Mammary epithelial cell (primary cell): ENCODE measurements at regions of chr7 and their contacts with region 1.

Region 1: GRCh38 chr7:91880413-91881241 is at the start of gene MTERF1:
- DNase-seq: peak; percentile 85
- H3K4me3 ChIP-seq: peak within 1 kb of the TSS; percentile 69 to 85 (median 72)
- H3K27ac ChIP-seq: peak within 1 kb of the TSS; percentile 55
- H3K4me1 ChIP-seq: peaks cover 3% of the 10 kb centered on the region
- H3K27me3 ChIP-seq: no peaks in the 10 kb centered on the region
- CTCF ChIP-seq: peak; percentile 84 to 97
- total RNA-seq, gene MTERF1: 11.1 to 16.5 TPM

Region 2: DNA sequence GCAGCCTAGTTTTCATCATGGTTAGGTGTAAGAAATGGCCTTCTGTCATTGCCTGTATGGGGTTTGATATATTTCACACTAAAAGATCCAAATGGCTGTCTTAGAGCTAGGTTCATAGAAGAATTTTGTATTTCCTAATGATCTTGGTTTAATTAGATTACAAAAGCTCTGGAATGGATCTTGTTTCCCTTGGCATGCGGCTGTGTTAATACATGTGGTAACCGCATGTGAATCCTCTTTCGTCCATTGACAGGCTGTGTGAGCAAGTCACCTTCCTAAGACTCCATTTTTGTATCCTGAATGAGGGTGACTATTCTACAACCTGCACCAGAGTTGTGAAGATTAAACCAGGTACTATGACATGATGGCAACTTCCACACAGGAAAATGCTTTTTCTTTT is 628.8 kb before region 1 on chr7:
- CTCF ChIA-PET with region 1: no interaction called
- dilution Hi-C with region 1: no loop called
- in situ Hi-C with region 1: no loop called
- intact Hi-C with region 1: no loop called
- DNase-seq: no peak
- H3K4me3 ChIP-seq: no peak overlapping the region
- H3K27ac ChIP-seq: no peak overlapping the region
- H3K4me1 ChIP-seq: peaks cover 23% of the 10 kb centered on the region
- H3K27me3 ChIP-seq: no peaks in the 10 kb centered on the region
- CTCF ChIP-seq: no peak

Region 3: DNA sequence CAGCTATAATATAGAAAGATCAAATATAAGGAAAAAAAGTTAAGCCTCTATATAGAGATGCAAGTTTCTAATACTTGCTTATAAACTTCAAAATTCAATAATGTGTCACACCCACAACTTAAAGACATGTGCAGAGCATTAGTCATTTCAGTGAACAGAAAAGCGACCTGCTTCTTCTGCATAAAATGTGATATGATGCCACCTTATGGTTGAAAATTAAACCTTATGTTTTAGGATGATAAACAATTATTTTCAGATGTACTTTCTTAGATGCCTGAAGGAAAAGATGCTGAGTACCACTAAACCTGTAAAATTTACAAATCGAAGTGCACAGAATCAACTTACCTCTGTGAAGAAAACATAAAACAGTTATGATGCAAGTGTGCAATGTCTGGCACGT is 96.2 kb before region 1 on chr7:
- CTCF ChIA-PET with region 1: no interaction called
- dilution Hi-C with region 1: no loop called
- in situ Hi-C with region 1: no loop called
- intact Hi-C with region 1: loop called (anchors 5 kb)
- DNase-seq: peak; percentile 53
- H3K4me3 ChIP-seq: no peak overlapping the region
- H3K27ac ChIP-seq: no peak overlapping the region
- H3K4me1 ChIP-seq: no peaks in the 10 kb centered on the region
- H3K27me3 ChIP-seq: no peaks in the 10 kb centered on the region
- CTCF ChIP-seq: peak; percentile 32 to 47

Region 4: DNA sequence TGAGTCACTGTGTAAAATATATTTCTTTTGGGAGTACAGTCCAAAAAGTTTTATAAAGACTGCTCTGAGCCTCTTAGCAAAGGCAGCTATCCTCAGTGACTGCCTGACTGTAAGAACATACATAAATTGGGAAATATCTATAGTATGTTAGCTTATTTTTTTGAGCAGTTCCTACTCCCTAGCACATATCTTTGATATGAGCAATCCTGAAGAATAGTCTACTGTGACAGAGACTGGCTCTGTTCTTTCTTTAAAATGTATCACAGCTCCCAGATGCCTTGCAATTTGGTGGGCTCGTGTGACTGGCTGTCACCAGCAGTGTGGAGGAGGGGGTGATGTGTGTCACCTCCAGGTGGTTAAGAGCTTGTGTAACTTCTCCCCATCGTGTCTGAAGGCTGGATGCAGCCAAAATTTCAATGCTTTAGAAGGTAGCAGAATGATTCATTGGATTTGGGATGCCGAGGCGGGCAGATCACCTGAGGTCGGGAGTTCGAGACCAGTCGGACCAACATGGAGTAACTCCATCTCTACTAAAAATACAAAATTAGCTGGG is 48.1 kb before region 1 on chr7:
- CTCF ChIA-PET with region 1: interaction called, 4 read pairs
- dilution Hi-C with region 1: no loop called
- in situ Hi-C with region 1: loop called in 1 of 2 experiments (anchors 5 kb)
- intact Hi-C with region 1: loop called (anchors 1 kb)
- DNase-seq: peak; percentile 22
- H3K4me3 ChIP-seq: no peak overlapping the region
- H3K27ac ChIP-seq: no peak overlapping the region
- H3K4me1 ChIP-seq: peaks cover 14% of the 10 kb centered on the region
- H3K27me3 ChIP-seq: no peaks in the 10 kb centered on the region
- CTCF ChIP-seq: no peak

Region 5: DNA sequence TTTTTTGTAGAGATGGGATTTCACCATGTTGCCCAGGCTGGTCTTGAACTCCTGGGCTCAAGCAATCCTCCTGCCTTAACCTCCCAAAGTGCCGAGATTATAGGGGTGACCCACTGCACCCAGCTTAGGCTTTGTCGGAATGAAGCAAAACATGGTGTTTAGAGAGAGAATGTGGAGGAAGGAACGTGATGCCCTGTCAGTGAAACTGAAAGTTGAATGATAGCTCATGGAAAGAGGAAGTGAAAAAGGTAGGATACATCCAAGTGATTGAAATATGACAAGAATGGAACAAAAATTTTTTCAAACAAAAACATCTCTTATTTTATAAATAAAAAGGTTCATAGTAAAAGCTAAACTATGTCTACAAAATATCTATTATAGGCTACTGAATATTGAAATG is 65.9 kb after region 1 on chr7:
- CTCF ChIA-PET with region 1: interaction called, 11 read pairs
- dilution Hi-C with region 1: no loop called
- in situ Hi-C with region 1: no loop called
- intact Hi-C with region 1: loop called (anchors 1 kb)
- DNase-seq: no peak
- H3K4me3 ChIP-seq: no peak overlapping the region
- H3K27ac ChIP-seq: no peak overlapping the region
- H3K4me1 ChIP-seq: peaks cover 5% of the 10 kb centered on the region
- H3K27me3 ChIP-seq: no peaks in the 10 kb centered on the region
- CTCF ChIP-seq: no peak

Region 6: GRCh38 chr7:92043637-92044036 is 163.0 kb after region 1 on chr7:
- CTCF ChIA-PET with region 1: no interaction called
- dilution Hi-C with region 1: no loop called
- in situ Hi-C with region 1: no loop called
- intact Hi-C with region 1: loop called (anchors 1 kb)
- DNase-seq: no peak
- H3K4me3 ChIP-seq: no peak overlapping the region
- H3K27ac ChIP-seq: no peak overlapping the region
- H3K4me1 ChIP-seq: no peaks in the 10 kb centered on the region
- H3K27me3 ChIP-seq: no peaks in the 10 kb centered on the region
- CTCF ChIP-seq: no peak

Region 7: GRCh38 chr7:92161271-92161670 is 280.6 kb after region 1 on chr7:
- CTCF ChIA-PET with region 1: no interaction called
- dilution Hi-C with region 1: loop called (anchors 10 kb)
- in situ Hi-C with region 1: no loop called
- intact Hi-C with region 1: no loop called
- DNase-seq: no peak
- H3K4me3 ChIP-seq: no peak overlapping the region
- H3K27ac ChIP-seq: no peak overlapping the region
- H3K4me1 ChIP-seq: no peaks in the 10 kb centered on the region
- H3K27me3 ChIP-seq: no peaks in the 10 kb centered on the region
- CTCF ChIP-seq: no peak

Region 8: DNA sequence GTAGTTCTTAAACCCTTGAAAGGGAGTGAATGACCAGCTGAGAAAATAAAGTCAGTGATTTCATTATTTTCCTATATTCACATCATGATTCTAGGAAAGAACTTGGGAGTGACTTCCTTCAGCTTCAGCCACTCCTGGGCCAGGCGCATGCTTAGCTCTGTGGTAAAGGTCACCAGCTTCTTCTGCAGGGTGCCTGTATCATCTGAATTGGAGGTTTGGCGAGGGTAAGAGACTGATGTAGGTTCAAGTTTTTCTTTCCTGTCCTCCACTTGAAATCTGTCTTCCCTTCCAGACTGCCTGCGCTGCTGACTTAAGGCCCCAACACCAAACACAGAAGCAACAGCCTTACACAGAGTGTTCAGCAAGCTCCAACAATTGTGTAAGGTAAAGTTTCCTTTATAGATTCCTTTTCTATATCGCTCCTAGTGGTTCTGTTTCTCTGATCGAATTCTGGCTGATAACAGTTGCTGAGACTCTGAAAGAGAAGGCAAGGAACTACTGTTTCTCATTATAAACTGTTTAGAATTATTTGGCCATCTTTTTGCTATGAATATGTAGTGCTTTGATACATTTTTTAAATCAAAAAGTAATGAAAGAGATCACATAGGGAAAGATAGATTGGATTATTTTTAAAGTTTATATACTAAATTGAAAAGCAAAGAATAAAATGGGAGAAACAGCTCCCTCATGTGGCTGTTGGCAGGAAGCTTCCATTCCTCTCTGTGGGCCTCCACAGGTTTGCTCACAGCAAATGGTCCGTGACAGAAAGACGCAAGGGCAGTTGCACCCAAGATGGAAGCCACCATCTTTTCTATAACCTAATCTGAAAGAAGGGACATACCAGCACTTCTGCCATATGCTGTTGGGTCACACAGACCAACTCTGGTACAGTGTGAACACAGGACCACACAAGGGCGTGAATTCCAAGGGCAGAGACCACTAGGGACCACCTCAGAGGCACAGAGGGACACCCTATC is 580.7 kb after region 1 on chr7:
- CTCF ChIA-PET with region 1: no interaction called
- dilution Hi-C with region 1: no loop called
- in situ Hi-C with region 1: no loop called
- intact Hi-C with region 1: loop called (anchors 5 kb)
- DNase-seq: peak; percentile 9
- H3K4me3 ChIP-seq: no peak overlapping the region
- H3K27ac ChIP-seq: no peak overlapping the region
- H3K4me1 ChIP-seq: peaks cover 14% of the 10 kb centered on the region
- H3K27me3 ChIP-seq: no peaks in the 10 kb centered on the region
- CTCF ChIP-seq: peak; percentile 82